ENCODE measurements at regions of chr15 and their contacts with region 1.

Region 1: DNA sequence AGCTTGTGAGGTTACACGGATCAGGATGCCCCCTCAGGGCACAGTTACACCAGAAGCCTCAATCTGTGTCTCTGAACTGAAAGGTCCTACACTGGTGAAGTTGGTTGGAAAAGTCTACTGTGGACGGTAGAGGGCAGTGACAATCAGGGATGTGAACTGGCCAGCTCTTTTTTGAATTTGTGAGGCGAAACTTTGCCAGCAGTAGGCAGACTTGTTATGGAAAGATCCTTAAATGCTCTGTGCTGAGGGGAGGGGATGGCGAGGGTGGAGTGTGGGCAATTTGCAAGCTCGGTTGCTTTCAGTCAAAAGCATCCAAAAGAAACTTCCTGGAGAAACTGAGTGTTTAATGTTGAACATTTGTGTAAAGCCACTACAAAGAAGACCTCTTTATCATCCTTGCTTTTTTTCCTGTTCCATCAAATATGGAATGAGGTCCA is 127.4 kb upstream of the ABHD17C start:
- H3K4me3 Mint-ChIP-seq: no peak overlapping the region
- H3K27ac Mint-ChIP-seq: no peak overlapping the region
- H3K4me1 Mint-ChIP-seq: no peaks in the 10 kb centered on the region
- H3K27me3 Mint-ChIP-seq: peaks cover 38% of the 10 kb centered on the region

Region 2: GRCh38 chr15:80309769-80310384 is 257.9 kb before region 1 on chr15:
- intact Hi-C with region 1: no loop called
- H3K4me3 Mint-ChIP-seq: no peak overlapping the region
- H3K27ac Mint-ChIP-seq: no peak overlapping the region
- H3K4me1 Mint-ChIP-seq: no peaks in the 10 kb centered on the region
- H3K27me3 Mint-ChIP-seq: peaks cover 22% of the 10 kb centered on the region

Region 3: DNA sequence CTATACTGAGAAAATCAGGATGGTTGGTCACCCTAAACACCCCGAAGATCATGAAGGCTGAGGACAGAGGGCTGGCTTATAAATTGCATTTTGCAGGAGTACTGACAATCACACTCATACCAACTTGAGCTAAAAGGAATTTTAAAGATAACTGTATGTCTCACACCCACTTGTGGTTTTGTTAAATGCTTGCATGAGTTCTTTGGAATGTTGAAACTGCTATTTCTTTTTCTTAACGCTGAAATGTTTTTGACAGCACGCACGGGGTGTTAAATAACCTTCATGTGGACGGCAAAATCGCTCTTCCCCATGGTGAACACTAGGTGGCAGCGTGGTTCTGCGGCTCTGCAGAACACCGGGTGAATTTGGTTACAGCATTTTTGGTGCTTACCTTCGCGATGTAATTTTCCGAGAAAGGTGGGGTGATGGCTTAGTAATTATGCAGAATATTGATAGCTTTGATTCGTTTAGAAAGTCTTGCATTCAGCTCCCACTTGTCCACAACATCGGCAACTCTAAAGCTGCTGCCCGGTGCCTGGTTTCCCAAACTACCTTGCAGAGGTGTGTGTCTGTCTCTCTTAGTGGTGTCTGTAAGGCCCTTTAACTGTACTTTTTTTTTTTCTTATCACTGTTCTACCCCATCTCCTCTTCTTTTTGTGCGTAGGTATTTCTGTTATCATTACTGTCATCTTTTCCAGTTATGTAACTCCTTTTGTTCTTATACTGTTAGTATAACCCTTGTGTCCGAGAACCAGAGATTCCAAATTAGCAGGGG is 111.9 kb before region 1 on chr15:
- intact Hi-C with region 1: loop called (anchors 2 kb)
- H3K4me3 Mint-ChIP-seq: no peak overlapping the region
- H3K27ac Mint-ChIP-seq: no peak overlapping the region
- H3K4me1 Mint-ChIP-seq: peaks cover 17% of the 10 kb centered on the region
- H3K27me3 Mint-ChIP-seq: peaks cover 94% of the 10 kb centered on the region

Region 4: GRCh38 chr15:80970018-80970658 is 402.4 kb after region 1 on chr15:
- intact Hi-C with region 1: loop called (anchors 5 kb)
- H3K4me3 Mint-ChIP-seq: no peak overlapping the region
- H3K27ac Mint-ChIP-seq: no peak overlapping the region
- H3K4me1 Mint-ChIP-seq: no peaks in the 10 kb centered on the region
- H3K27me3 Mint-ChIP-seq: no peaks in the 10 kb centered on the region

Measured in dendritic cell treated with granulocyte-macrophage colony-stimulating factor and Interleukin-4, amounts not matched to agents 40 ng/mL and 50 ng/mL, for 4 days (primary cell).